B cell (primary cell): ENCODE measurements at regions of chr19 and their contacts with region 1.

Region 1: DNA sequence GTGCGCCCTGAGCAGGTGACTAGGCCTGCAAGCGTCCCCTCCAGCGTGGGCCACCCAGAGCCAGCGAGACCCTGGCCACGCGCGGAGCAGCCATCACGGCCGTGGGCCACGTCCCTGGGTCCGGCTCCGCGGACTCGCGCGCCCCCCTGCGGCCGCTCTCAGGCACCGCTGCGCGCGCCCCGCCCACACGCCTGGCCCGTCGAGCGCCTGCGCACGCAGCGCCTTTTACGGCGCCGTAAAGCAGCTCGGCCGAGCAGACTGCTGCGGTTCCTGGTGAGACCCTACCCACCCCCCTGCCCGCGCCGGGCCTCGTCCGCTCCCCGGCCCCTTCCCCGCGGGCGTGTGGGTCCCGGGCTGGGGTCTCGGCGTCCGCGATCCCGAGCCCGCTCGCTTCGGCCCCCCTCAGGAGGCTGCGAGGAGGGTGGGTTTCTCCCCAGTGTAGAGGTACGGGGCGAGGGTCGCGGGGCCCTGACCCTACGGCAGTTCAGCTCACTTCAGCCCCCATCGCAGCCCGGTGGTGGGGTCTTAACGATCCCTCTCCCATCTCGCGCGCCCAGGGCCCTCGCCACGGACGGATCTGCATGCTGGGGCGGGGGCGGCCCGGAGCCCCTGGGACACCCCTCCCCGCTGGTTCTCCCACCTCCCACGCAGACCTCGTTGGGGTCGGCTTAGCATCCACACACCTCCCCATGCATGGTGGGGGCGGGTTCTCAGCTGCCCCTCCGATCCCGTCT is at the start of gene TRAPPC5:
- DNase-seq: peak; percentile 93
- ATAC-seq: peak; percentile 65
- H3K4me3 ChIP-seq: peak within 1 kb of the TSS; percentile 35 to 98 (median 93)
- H3K4me3 Mint-ChIP-seq: peak within 1 kb of the TSS; percentile 87
- H3K27ac ChIP-seq: peak within 1 kb of the TSS; percentile 79 to 92
- H3K27ac Mint-ChIP-seq: peak within 1 kb of the TSS; percentile 92
- H3K4me1 ChIP-seq: peaks cover 37 to 45% of the 10 kb centered on the region in 2 donors
- H3K4me1 Mint-ChIP-seq: peaks cover 63% of the 10 kb centered on the region
- H3K27me3 ChIP-seq: peaks cover 0 to 21% (median 3%) of the 10 kb centered on the region in 4 experiments
- H3K27me3 Mint-ChIP-seq: peaks cover 15% of the 10 kb centered on the region
- CTCF ChIP-seq: peak; percentile 95
- total RNA-seq, gene TRAPPC5: 61.2 and 61.5 TPM in 2 replicates

Region 2: DNA sequence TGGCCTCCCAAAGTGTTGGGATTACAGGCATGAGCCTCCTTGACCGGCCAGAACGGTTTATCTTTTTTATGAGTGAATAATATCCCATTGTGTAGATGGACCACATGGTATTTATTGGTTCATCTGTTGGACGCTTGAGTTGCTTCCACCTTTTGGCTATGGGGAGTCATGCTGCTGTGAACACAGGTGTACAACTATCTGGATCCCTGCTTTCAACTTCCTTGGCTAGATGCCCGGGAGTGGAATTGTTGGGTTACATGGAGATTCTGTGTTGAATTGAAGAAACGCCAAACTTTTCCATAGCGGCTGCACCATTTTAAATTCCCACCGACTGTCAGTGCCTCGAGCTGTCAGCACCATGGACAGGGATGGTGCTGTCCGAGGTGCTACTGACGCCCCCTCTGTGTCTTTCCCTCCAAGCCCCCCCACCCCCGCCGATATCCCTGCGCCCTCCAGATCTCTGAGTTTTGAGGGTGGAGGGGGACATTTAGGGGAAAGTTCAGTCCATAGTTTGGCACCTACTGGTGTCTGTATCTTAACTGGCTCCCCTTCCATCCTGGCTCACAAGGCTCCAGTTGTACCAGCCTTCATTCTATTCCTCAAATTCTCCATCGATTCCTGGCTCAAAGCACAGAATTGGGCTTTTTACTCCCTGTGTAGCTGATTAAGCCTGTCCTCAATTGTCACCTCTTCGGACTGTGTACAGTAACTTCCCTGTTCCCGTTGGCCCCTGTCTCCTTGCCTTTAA is 118.0 kb before region 1 on chr19:
- CTCF ChIA-PET with region 1: interaction called, 12 read pairs
- POLR2A ChIA-PET with region 1: no interaction called
- intact Hi-C with region 1: no loop called
- DNase-seq: peak; percentile 19
- ATAC-seq: no peak
- H3K4me3 ChIP-seq: no peak overlapping the region
- H3K4me3 Mint-ChIP-seq: no peak overlapping the region
- H3K27ac ChIP-seq: no peak overlapping the region
- H3K27ac Mint-ChIP-seq: no peak overlapping the region
- H3K4me1 ChIP-seq: no peaks in the 10 kb centered on the region
- H3K4me1 Mint-ChIP-seq: no peaks in the 10 kb centered on the region
- H3K27me3 ChIP-seq: no peaks in the 10 kb centered on the region
- H3K27me3 Mint-ChIP-seq: no peaks in the 10 kb centered on the region
- CTCF ChIP-seq: no peak

Region 3: DNA sequence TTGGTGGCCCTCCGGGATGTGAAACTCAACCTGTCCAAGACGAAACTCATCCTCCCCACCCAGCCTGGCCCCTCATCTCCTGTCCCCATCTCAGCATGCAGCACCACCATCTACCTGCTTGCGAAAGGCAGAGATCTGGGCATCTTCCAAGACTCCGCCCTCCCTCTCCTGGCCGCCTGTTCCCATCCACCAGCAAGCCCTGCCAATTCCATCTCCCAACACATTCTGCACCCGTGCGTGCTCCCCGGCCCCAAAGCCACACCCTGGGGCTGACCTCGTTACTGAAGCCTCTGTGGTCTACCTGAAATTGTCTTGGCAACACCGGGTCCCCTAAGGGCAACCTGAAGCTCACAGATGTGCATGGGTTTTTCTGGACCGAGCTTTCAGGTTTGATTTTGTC is 98.3 kb before region 1 on chr19:
- CTCF ChIA-PET with region 1: no interaction called
- POLR2A ChIA-PET with region 1: no interaction called
- intact Hi-C with region 1: no loop called
- DNase-seq: no peak
- ATAC-seq: no peak
- H3K4me3 ChIP-seq: no peak overlapping the region
- H3K4me3 Mint-ChIP-seq: no peak overlapping the region
- H3K27ac ChIP-seq: no peak overlapping the region
- H3K27ac Mint-ChIP-seq: no peak overlapping the region
- H3K4me1 ChIP-seq: no peaks in the 10 kb centered on the region
- H3K4me1 Mint-ChIP-seq: no peaks in the 10 kb centered on the region
- H3K27me3 ChIP-seq: no peaks in the 10 kb centered on the region
- H3K27me3 Mint-ChIP-seq: peaks cover 4% of the 10 kb centered on the region
- CTCF ChIP-seq: no peak

Region 4: GRCh38 chr19:7692417-7693088 is 11.8 kb after region 1 on chr19:
- CTCF ChIA-PET with region 1: interaction called, 58 read pairs
- POLR2A ChIA-PET with region 1: interaction called, 6 read pairs
- intact Hi-C with region 1: loop called (anchors 1 kb)
- DNase-seq: no peak
- ATAC-seq: no peak
- H3K4me3 ChIP-seq: no peak overlapping the region
- H3K4me3 Mint-ChIP-seq: no peak overlapping the region
- H3K27ac ChIP-seq: peak overlapping the region; percentile 43 to 59
- H3K27ac Mint-ChIP-seq: no peak overlapping the region
- H3K4me1 ChIP-seq: peaks cover 66 to 69% of the 10 kb centered on the region in 2 donors
- H3K4me1 Mint-ChIP-seq: peaks cover 33% of the 10 kb centered on the region
- H3K27me3 ChIP-seq: no peaks in the 10 kb centered on the region
- H3K27me3 Mint-ChIP-seq: no peaks in the 10 kb centered on the region
- CTCF ChIP-seq: no peak

Region 5: DNA sequence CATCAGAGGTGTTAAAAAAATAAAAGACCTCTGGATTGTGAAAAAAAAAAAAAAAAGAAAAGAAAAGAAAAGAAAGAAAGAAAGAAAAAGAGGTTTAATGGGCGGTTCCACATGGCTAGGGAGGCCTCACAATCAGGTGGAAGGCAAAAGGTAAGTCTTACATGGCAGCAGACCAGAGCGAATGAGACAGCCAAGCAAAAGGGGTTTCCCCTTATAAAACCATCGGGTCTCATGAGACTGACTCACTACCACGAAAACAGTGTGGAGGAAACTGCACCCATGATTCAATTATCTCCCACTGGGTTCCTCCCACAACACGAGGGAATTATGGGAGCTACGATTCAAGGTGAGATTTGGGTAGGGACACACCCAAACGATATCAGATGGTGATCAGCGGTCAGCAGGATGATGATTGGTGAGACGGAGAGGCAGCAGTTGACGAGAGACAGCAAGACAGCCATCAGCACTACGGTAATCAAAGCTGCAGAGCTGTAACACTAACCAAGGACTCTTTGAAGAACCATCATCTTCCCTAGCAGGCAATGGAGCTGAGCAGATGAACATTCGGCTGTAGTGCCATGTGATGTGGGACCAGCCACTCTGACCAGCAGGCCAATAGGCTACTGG is 70.5 kb after region 1 on chr19:
- CTCF ChIA-PET with region 1: interaction called, 8 read pairs
- POLR2A ChIA-PET with region 1: no interaction called
- intact Hi-C with region 1: loop called (anchors 1 kb)
- DNase-seq: peak; percentile 91
- ATAC-seq: peak; percentile 94
- H3K4me3 ChIP-seq: peak overlapping the region in 1 of 5 experiments; percentile 25
- H3K4me3 Mint-ChIP-seq: peak overlapping the region; percentile 58
- H3K27ac ChIP-seq: peak overlapping the region; percentile 80 to 84
- H3K27ac Mint-ChIP-seq: peak overlapping the region; percentile 90
- H3K4me1 ChIP-seq: peaks cover 34 to 43% of the 10 kb centered on the region in 2 donors
- H3K4me1 Mint-ChIP-seq: peaks cover 41% of the 10 kb centered on the region
- H3K27me3 ChIP-seq: peaks cover 0 to 5% (median 0%) of the 10 kb centered on the region in 4 experiments
- H3K27me3 Mint-ChIP-seq: peaks cover 5% of the 10 kb centered on the region
- CTCF ChIP-seq: no peak

Region 6: DNA sequence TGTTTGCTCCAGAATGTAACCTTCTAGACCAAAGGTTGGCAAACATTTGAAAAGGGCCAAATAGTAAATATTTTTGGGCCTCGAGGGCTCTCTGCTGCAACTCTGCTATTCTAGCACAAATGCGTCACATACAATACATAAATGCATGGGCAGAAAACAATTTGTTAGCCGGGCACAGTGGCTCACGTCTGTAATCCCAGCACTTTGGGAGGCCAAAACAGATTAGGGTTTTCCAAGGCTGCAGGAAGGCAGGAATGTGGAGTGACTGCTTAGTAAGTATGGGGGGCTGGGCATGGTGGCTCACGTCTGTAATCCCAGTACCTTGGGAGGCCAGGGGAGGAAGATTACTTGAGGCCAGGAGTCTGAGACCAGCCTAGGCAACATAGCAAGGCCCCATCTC is 127.4 kb after region 1 on chr19:
- CTCF ChIA-PET with region 1: interaction called, 145 read pairs
- POLR2A ChIA-PET with region 1: interaction called, 3 read pairs
- intact Hi-C with region 1: no loop called
- DNase-seq: no peak
- ATAC-seq: no peak
- H3K4me3 ChIP-seq: peak overlapping the region in 1 of 5 experiments; percentile 14
- H3K4me3 Mint-ChIP-seq: no peak overlapping the region
- H3K27ac ChIP-seq: peak overlapping the region in 1 of 2 donors; percentile 17
- H3K27ac Mint-ChIP-seq: no peak overlapping the region
- H3K4me1 ChIP-seq: peaks cover 0 to 17% of the 10 kb centered on the region in 2 donors
- H3K4me1 Mint-ChIP-seq: peaks cover 18% of the 10 kb centered on the region
- H3K27me3 ChIP-seq: peaks cover 0 to 6% (median 3%) of the 10 kb centered on the region in 4 experiments
- H3K27me3 Mint-ChIP-seq: peaks cover 3% of the 10 kb centered on the region
- CTCF ChIP-seq: no peak

Region 7: DNA sequence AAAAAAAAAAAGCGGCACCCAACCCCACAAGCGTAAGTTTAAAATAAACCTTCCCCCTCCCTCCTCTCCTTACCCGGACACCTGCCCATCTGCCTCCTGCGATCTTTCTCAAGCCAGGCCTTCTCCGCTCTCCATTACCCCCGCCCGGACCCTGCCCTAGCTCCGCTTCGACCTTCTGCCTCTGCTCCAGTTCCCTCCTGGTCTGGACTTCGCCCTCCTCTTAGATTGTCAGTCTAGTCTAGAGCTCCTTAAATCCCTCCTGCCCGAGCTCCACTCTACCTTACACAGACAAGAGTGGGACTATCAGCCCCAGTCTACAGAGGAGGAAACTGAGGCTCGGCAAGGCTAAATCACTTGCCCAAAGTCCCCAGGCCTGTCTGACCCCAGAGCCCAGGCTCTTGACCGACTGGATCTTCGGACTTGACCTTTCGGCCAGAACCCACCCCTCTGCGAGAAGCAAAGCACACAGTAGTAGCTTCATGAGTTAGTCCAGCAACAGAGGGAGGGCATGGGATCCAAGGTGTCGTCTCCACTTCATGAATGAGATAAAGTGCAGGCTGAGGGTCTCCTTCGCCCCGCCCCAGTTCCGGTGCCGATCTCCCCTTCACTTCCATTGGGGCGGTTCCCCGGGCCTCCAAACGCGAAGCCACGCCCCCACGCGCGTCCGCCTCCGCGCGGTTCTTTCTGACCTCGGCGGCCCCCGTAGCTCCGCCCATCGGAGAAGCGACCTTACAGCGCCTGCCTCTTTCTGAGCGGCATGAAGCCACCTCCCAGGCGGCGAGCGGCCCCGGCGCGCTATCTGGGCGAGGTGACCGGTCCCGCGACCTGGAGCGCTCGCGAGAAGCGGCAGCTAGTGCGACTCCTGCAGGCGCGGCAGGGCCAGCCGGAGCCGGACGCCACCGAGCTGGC is 239.1 kb after region 1 on chr19 and contains the start of gene SNAPC2:
- CTCF ChIA-PET with region 1: no interaction called
- POLR2A ChIA-PET with region 1: no interaction called
- intact Hi-C with region 1: loop called (anchors 1 kb)
- DNase-seq: peak; percentile 99
- ATAC-seq: peak; percentile 56
- H3K4me3 ChIP-seq: peak within 1 kb of the TSS; percentile 55 to 84 (median 75)
- H3K4me3 Mint-ChIP-seq: peak within 1 kb of the TSS; percentile 95
- H3K27ac ChIP-seq: peak within 1 kb of the TSS; percentile 73 to 74
- H3K27ac Mint-ChIP-seq: peak within 1 kb of the TSS; percentile 96
- H3K4me1 ChIP-seq: peaks cover 57 to 61% of the 10 kb centered on the region in 2 donors
- H3K4me1 Mint-ChIP-seq: peaks cover 48% of the 10 kb centered on the region
- H3K27me3 ChIP-seq: peaks cover 0 to 42% (median 24%) of the 10 kb centered on the region in 4 experiments
- H3K27me3 Mint-ChIP-seq: peaks cover 22% of the 10 kb centered on the region
- CTCF ChIP-seq: no peak
- total RNA-seq, gene SNAPC2: 19.3 and 19.9 TPM in 2 replicates